ENCODE measurements at regions of chr3 and their contacts with region 1.

Region 1: GRCh38 chr3:20185701-20186598 is at the start of gene SGO1:
- DNase-seq: peak; percentile 100
- H3K4me3 Mint-ChIP-seq: no peak within 1 kb of the TSS
- H3K27ac Mint-ChIP-seq: no peak within 1 kb of the TSS
- H3K4me1 Mint-ChIP-seq: peaks cover 31% of the 10 kb centered on the region
- H3K27me3 Mint-ChIP-seq: no peaks in the 10 kb centered on the region
- total RNA-seq, gene SGO1: 38.3 to 39.4 TPM

Region 2: GRCh38 chr3:19946832-19947548 is 239.0 kb before region 1 on chr3 and contains the start of gene RAB5A:
- CTCF ChIA-PET with region 1: interaction called, 5 read pairs
- POLR2A ChIA-PET with region 1: interaction called, 47 read pairs
- DNase-seq: peak; percentile 98
- H3K4me3 Mint-ChIP-seq: peak within 1 kb of the TSS; percentile 89
- H3K27ac Mint-ChIP-seq: peak within 1 kb of the TSS; percentile 99
- H3K4me1 Mint-ChIP-seq: peaks cover 40% of the 10 kb centered on the region
- H3K27me3 Mint-ChIP-seq: no peaks in the 10 kb centered on the region
- total RNA-seq, gene RAB5A: 60.0 to 64.5 TPM

Region 3: DNA sequence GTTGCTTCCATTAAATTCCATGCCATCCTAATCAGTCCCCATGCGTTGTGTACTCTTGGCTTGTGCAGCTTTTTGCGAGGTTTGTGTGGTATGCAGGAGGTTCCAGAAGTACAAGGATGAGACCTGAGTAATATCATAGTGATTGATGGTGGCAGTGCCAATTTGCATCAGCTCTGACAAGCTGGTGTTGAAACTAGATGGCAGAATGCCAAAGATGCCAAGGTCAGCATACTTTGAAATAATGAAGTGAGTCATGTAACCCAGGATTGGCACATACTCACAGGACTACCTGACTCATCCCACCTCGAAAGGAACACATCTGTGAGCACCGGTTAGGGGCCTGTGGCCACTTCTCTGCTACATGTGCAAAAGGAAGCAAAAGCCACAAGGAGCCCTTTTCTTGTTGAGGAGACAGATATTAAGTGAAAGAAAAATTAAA is 131.4 kb before region 1 on chr3:
- CTCF ChIA-PET with region 1: interaction called, 4 read pairs
- POLR2A ChIA-PET with region 1: interaction called, 32 read pairs
- DNase-seq: peak; percentile 84
- H3K4me3 Mint-ChIP-seq: no peak overlapping the region
- H3K27ac Mint-ChIP-seq: no peak overlapping the region
- H3K4me1 Mint-ChIP-seq: peaks cover 37% of the 10 kb centered on the region
- H3K27me3 Mint-ChIP-seq: no peaks in the 10 kb centered on the region

Region 4: DNA sequence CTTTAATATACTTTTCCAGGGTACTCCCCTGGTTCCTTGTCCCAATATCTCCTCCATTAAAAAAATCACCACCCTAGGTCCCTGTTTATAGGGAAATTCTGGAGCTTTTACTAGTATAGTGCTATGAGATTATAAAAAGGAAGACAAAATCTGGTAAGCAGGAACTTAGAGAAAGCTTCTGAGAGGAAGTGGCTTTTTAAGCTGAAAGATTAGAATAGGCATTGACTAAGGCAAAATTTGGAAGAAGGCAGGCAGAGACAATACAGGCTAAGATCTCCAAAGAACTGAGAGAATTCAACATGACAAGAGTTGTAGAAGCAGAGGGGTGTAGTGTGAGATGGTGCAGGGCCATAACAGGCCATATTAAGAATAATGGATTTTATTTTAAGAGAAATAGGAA is 25.7 kb before region 1 on chr3:
- CTCF ChIA-PET with region 1: no interaction called
- POLR2A ChIA-PET with region 1: interaction called, 14 read pairs
- DNase-seq: no peak
- H3K4me3 Mint-ChIP-seq: no peak overlapping the region
- H3K27ac Mint-ChIP-seq: peak overlapping the region; percentile 51
- H3K4me1 Mint-ChIP-seq: peaks cover 14% of the 10 kb centered on the region
- H3K27me3 Mint-ChIP-seq: no peaks in the 10 kb centered on the region

Region 5: GRCh38 chr3:20516311-20516710 is 330.4 kb after region 1 on chr3:
- CTCF ChIA-PET with region 1: no interaction called
- POLR2A ChIA-PET with region 1: no interaction called
- DNase-seq: no peak
- H3K4me3 Mint-ChIP-seq: no peak overlapping the region
- H3K27ac Mint-ChIP-seq: no peak overlapping the region
- H3K4me1 Mint-ChIP-seq: no peaks in the 10 kb centered on the region
- H3K27me3 Mint-ChIP-seq: no peaks in the 10 kb centered on the region

Region 6: DNA sequence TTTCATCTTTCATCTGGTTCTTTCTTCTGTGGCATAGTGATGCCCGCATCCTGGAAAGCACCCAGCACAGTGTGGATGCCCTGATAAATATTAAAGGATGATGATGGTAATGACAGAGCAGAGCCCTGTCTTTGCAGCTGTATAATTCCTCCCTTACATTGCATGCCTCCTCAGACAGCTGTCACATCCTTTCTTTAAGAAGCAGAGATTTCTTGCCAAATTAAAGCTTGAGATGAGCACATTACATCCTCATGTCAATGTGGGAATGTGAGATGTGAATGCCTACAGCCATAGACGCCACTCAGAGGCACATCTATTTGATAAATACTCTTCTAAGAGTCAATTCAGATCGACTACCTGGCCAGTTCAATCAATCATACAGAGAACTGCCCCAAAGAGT is 923.1 kb after region 1 on chr3:
- CTCF ChIA-PET with region 1: no interaction called
- POLR2A ChIA-PET with region 1: no interaction called
- DNase-seq: no peak
- H3K4me3 Mint-ChIP-seq: no peak overlapping the region
- H3K27ac Mint-ChIP-seq: no peak overlapping the region
- H3K4me1 Mint-ChIP-seq: no peaks in the 10 kb centered on the region
- H3K27me3 Mint-ChIP-seq: no peaks in the 10 kb centered on the region

Measured in activated CD4-positive, alpha-beta memory T cell treated with anti-CD3 and anti-CD28 coated beads, Interleukin-2, amount 10 ng/mL, durations not matched to agents 7 days and 5 days (primary cell).